A549 (cell line): ENCODE measurements at regions of chr16 and their contacts with region 1.

Region 1: DNA sequence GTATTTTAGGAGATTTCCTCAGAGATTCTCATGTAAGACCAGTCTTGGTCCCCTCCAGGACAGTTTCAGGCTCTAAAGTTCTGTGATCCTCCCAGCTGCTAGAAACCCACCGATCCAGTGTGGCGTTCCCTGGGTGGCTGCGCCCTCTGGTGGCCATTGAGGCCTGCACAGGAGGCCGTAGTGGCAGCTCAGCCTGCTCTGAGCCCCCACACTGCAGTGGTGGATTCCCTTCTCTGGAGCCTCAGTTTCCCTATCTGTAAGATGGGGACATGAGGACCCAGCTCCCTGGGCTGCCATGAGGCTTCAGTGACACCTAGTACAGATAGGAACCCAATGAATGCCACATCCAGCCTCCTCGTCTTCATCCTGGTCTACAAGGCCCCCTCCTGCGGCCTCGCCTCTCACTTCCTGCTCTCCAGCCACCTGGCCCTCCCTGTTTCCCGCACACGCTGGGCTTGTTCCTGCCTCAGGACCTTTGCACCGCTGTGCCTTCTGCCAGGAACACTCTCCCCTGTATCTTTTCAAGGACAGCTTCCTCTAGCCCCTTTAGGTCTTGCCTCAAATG is 16.5 kb downstream of the CCDC102A start:
- DNase-seq: peak; percentile 68 to 91
- ATAC-seq: peak; percentile 85 to 96
- H3K4me3 ChIP-seq: no peak overlapping the region
- H3K27ac ChIP-seq: peak overlapping the region; percentile 29 to 57; a peak in 3 of 6 replicates
- H3K4me1 ChIP-seq: no peaks in the 10 kb centered on the region
- CTCF ChIP-seq: peak; percentile 98
- EP300 ChIP-seq: no peak
- POLR2A ChIP-seq: no peak
- RAD21 ChIP-seq: peak; percentile 97 to 98

Region 2: GRCh38 chr16:57341441-57342303 is 178.2 kb before region 1 on chr16:
- CTCF ChIA-PET with region 1: no interaction called
- POLR2A ChIA-PET with region 1: no interaction called
- DNase-seq: peak in 1 of 2 experiments; percentile 58
- ATAC-seq: no peak
- H3K4me3 ChIP-seq: no peak overlapping the region
- H3K27ac ChIP-seq: peak overlapping the region; percentile 31 to 40; a peak in 2 of 6 replicates
- H3K4me1 ChIP-seq: peaks cover 22% of the 10 kb centered on the region
- CTCF ChIP-seq: no peak
- EP300 ChIP-seq: no peak
- POLR2A ChIP-seq: no peak
- RAD21 ChIP-seq: no peak

Region 3: GRCh38 chr16:57447186-57447962 is 72.5 kb before region 1 on chr16 and contains the starts of genes CIAPIN1 and COQ9:
- CTCF ChIA-PET with region 1: interaction called, 20 read pairs
- POLR2A ChIA-PET with region 1: interaction called, 6 read pairs
- DNase-seq: peak; percentile 89 to 93
- ATAC-seq: peak; percentile 100
- H3K4me3 ChIP-seq: peak within 1 kb of the TSS; percentile 96
- H3K27ac ChIP-seq: peak within 1 kb of the TSS; percentile 99
- H3K4me1 ChIP-seq: peaks cover 27% of the 10 kb centered on the region
- CTCF ChIP-seq: no peak
- EP300 ChIP-seq: no peak
- POLR2A ChIP-seq: peak; percentile 83
- RAD21 ChIP-seq: 0 out of 5 replicates have a peak, but pooled peaks of 1 of the 2 experiments have one; percentile 10
- polyA plus RNA-seq, gene CIAPIN1: 101 and 114 TPM in 2 replicates
- polyA plus RNA-seq, gene COQ9: 109 and 130 TPM in 2 replicates

Region 4: DNA sequence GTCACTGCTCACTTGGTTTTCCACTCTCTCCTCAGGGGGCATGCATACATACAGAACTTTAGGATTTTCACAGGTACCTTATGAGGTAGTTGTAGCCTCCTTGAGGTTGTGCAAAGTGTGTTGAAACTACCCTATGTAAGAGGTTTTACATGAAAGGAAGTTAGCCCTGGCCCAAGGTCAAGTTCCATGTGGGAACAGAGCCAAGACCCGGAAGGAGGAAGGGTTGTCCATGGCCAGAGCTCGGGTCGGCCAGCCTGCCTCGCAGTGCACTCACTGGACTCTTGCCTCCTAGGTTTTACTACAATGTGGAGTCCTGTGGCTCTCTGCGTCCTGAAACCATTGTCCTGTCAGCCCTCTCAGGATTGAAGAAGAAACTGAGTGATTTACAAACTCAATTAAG is 49.2 kb before region 1 on chr16:
- CTCF ChIA-PET with region 1: interaction called, 54 read pairs
- POLR2A ChIA-PET with region 1: no interaction called
- DNase-seq: peak in 1 of 2 experiments; percentile 66
- ATAC-seq: peak in 1 of 2 experiments; percentile 3; a peak in 2 of 6 replicates
- H3K4me3 ChIP-seq: peak overlapping the region; percentile 26; the same call in 2 of the 3 replicates
- H3K27ac ChIP-seq: peak overlapping the region; percentile 96 to 98
- H3K4me1 ChIP-seq: peaks cover 93% of the 10 kb centered on the region
- CTCF ChIP-seq: 0 out of 3 replicates have a peak, but pooled peaks have one; percentile 6
- EP300 ChIP-seq: peak; percentile 34; a peak in 1 of 5 replicates
- POLR2A ChIP-seq: no peak
- RAD21 ChIP-seq: no peak

Region 5: GRCh38 chr16:57485916-57486857 is 33.7 kb before region 1 on chr16 and contains the start of gene DOK4:
- CTCF ChIA-PET with region 1: interaction called, 66 read pairs
- POLR2A ChIA-PET with region 1: interaction called, 5 read pairs
- DNase-seq: peak; percentile 47 to 89
- ATAC-seq: peak; percentile 94 to 96
- H3K4me3 ChIP-seq: peak within 1 kb of the TSS; percentile 100
- H3K27ac ChIP-seq: peak within 1 kb of the TSS; percentile 94 to 98
- H3K4me1 ChIP-seq: peaks cover 45% of the 10 kb centered on the region
- CTCF ChIP-seq: no peak
- EP300 ChIP-seq: no peak
- POLR2A ChIP-seq: peak; percentile 66
- RAD21 ChIP-seq: no peak
- polyA plus RNA-seq, gene DOK4: 85.4 and 93.2 TPM in 2 replicates

Region 6: DNA sequence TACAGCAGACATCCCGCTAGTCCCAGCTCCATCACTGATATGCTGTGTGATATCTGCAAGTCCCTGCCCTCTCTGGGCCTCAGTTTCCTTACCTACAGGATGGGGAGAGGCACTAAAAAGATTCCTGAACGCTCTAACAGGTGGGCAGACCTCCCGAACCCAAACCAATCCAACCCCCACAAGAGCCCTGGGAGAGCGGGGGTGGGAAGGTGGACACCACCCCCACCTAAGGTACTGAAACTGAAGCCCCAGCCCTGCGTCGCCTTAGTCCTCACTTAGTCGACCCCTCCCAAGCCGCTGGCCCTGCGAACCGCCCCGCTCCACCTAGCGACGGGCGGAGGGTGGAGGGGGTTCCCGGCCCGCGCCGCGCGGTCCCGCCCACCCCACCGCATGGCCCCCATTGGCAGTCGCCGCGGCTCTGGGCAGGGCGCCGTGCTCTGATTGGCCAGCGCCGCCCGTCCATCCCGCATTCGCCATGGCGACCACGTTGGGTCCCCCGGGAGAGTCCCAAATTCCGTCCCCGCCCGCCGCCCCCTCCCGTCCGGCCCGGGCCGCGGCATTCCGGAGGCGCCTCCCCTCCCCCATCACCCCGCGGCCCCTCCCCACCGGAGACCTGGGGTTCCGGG is 15.9 kb after region 1 on chr16:
- CTCF ChIA-PET with region 1: interaction called, 23 read pairs
- POLR2A ChIA-PET with region 1: no interaction called
- DNase-seq: peak; percentile 92 to 98
- ATAC-seq: peak; percentile 94 to 98
- H3K4me3 ChIP-seq: peak overlapping the region; percentile 67
- H3K27ac ChIP-seq: peak overlapping the region; percentile 95 to 96
- H3K4me1 ChIP-seq: peaks cover 51% of the 10 kb centered on the region
- CTCF ChIP-seq: no peak
- EP300 ChIP-seq: no peak
- POLR2A ChIP-seq: peak; percentile 32
- RAD21 ChIP-seq: no peak